Cardiac septum (tissue), 1 donor: ENCODE measurements at regions of chr6 and their contacts with region 1.

Region 1: GRCh38 chr6:130322673-130323268 is 43.0 kb upstream of the TMEM200A start:
- DNase-seq: no peak

Region 2: DNA sequence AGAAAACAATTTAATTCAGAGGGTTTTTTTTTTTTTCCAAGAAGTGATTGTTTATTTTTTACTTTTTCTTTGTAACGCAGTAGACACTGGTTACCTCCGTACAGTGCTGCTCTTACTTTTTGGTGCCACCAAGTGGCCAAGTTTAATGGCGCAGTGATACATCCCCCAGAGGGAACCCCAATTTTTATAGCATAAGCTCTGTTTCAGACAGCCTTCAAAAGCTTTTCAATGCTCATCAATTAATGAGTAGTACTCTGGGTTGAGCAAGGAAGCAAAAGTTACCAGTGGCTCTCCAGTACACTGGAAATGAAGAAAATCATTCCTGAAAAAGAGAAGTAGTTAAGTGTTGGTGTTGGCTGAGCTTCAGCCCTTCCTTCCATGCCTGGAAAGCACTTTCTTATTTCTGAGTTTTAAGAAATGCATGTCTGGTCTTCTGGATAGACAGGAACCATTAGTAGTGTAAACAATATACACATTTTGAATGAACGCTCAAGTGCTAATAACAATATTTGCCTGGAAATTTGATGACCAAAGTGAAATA is 375.3 kb after region 1 on chr6:
- intact Hi-C with region 1: loop called (anchors 5 kb)
- DNase-seq: no peak

Region 3: GRCh38 chr6:130843575-130844320 is 521.0 kb after region 1 on chr6:
- intact Hi-C with region 1: loop called (anchors 10 kb)
- DNase-seq: no peak

Region 4: GRCh38 chr6:130872250-130873095 is 549.7 kb after region 1 on chr6:
- intact Hi-C with region 1: loop called (anchors 2 kb)
- DNase-seq: no peak